Heart left ventricle (tissue), 16 donors: ENCODE measurements at regions of chr1 and their contacts with region 1.

Region 1: DNA sequence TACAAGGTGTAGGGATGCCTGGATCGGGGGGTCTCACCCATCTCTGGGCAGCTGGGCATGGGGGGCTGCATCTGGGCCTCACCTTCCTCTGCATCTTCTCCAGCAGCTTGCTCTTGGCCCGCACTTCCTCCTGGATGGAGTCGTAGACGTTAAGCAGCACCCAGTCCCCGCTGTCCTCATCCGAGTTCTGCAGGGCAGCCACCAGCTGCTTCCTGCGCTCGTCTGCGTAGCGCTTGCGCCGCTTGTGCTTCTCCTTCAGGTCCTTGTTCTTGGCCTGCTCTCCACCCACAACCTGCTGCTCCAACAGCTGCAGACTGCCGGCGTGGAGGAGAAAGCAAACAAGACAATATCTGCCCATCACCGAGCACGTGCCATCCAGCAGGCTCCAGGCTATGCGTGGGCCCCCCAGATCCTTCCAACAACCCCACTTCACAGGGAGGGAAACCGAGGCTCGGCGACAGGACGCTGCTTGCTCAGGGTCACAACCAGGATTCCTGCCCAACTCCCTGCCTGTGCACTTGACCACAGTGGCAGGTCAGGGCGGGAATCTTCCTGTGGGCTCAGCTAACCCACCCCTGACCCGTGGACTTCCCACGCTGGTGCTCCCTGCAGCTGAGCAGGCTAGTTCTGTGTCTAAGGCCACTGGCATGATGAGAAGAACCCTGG is 21.5 kb upstream of the DDOST start:
- DNase-seq: peak in 3 of 5 donors; percentile 33 to 65 (median 61)
- ATAC-seq: peak in 3 of 4 donors; percentile 16 to 28 (median 17)
- H3K4me3 ChIP-seq: peak overlapping the region in 7 of 12 donors; percentile 7 to 67 (median 53)
- H3K27ac ChIP-seq: peak overlapping the region in 7 of 12 donors; percentile 8 to 95 (median 86)
- H3K4me1 ChIP-seq: peaks cover 0 to 34% (median 14%) of the 10 kb centered on the region in 12 donors
- H3K27me3 ChIP-seq: no peaks in the 10 kb centered on the region
- CTCF ChIP-seq: no peak
- POLR2A ChIP-seq: no peak

Region 2: DNA sequence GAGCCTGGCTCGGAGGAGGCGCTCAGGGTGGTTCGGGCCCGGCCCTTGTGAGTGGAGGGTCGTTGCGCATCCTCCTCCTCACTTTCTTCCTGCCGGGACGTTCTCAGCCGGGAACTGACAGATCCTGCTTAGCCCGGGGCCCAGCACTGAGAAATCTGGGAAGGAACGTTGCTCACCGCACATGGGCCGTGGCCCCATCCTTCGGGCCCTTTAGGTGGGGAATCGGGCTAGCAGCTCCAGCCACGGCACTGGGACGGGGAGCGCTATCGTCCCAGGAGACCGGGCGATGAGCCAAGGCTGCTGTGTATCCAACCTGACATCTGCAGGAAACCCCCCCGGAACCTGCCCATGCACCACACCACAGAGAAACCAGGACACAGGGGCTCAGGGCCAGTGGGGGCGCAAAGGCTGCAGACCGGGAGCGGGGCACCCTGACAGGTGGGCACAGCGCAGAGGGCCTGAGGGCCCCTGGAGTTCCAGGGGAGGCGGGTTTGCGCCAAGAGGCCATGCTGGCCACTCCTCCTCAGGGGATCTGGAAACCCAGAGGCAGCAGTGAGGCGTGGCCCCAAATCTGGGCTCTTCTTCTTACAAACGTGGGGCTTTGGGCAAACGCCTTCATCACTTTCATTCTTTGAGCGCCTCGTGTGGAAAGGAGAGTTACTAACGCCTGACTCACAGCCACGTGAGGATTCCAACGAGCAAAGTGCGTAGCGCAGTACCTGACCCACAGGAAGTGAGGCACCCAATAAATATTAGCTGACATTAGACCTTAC is 50.1 kb after region 1 on chr1 and contains the start of gene SH2D5:
- intact Hi-C with region 1: loop called in 1 of 10 experiments (anchors 5 kb)
- DNase-seq: peak in 4 of 5 donors; percentile 41 to 63 (median 51)
- ATAC-seq: peak; percentile 7 to 78 (median 64)
- H3K4me3 ChIP-seq: peak within 1 kb of the TSS; percentile 42 to 69 (median 56)
- H3K27ac ChIP-seq: peak within 1 kb of the TSS in 6 of 12 donors; percentile 19 to 57 (median 38)
- H3K4me1 ChIP-seq: peaks cover 0 to 32% (median 13%) of the 10 kb centered on the region in 12 donors
- H3K27me3 ChIP-seq: peaks cover 4 to 44% (median 26%) of the 10 kb centered on the region in 9 donors
- CTCF ChIP-seq: peak in 9 of 12 donors; percentile 9 to 51 (median 31)
- POLR2A ChIP-seq: no peak
- total RNA-seq, gene SH2D5: 0.30 to 0.67 TPM in 2 of 9 donors, not detected in the others